Transverse colon (tissue), 4 donors: ENCODE measurements at regions of chr12 and their contacts with region 1.

Region 1: DNA sequence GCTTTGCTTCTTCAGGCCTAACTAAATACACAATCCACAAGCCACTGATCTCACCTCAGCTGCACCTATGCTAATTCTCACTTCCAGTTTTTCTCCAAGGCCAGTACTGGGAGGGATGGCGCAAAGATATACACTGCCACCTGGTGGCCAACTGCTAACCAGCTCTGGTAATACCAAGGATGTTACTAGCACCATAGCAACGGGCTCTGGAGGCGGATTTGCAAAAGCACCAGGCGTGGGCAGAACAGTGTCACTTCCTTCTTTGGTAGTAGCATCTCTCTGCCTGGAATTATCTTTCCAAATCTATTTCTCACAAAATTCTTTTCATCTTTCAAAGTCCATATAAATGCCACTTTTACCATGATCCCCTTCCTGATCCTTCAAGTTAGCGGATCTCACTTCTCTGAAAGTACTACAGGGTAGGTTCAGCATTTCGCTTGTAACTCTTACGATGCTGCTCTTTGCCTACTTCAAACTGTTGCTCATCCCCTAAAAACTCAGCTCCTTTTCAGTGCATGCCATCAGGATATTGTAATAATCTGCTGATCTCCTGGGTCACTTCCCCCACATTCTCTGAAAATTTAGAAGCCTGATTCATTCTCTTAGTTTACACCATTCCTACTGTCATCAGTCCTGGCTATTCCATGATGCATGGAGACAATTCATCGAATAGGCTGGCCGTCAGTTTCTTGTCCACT is 37.1 kb upstream of the FOXJ2 start:
- DNase-seq: peak; percentile 77
- H3K4me3 ChIP-seq: no peak overlapping the region
- H3K27ac ChIP-seq: peak overlapping the region; percentile 21 to 60 (median 56)
- H3K4me1 ChIP-seq: peaks cover 0 to 3% (median 0%) of the 10 kb centered on the region in 4 donors
- H3K27me3 ChIP-seq: no peaks in the 10 kb centered on the region
- CTCF ChIP-seq: peak; percentile 82 to 88 (median 85)
- EP300 ChIP-seq: no peak
- POLR2A ChIP-seq: no peak

Region 2: GRCh38 chr12:6632026-6632983 is 1363.1 kb before region 1 on chr12:
- in situ Hi-C with region 1: no loop called
- intact Hi-C with region 1: no loop called
- DNase-seq: peak; percentile 53
- H3K4me3 ChIP-seq: peak overlapping the region in 1 of 4 donors; percentile 30
- H3K27ac ChIP-seq: peak overlapping the region; percentile 78 to 93 (median 86)
- H3K4me1 ChIP-seq: peaks cover 0 to 50% (median 41%) of the 10 kb centered on the region in 4 donors
- H3K27me3 ChIP-seq: no peaks in the 10 kb centered on the region
- CTCF ChIP-seq: no peak
- EP300 ChIP-seq: no peak
- POLR2A ChIP-seq: peak; percentile 11

Region 3: DNA sequence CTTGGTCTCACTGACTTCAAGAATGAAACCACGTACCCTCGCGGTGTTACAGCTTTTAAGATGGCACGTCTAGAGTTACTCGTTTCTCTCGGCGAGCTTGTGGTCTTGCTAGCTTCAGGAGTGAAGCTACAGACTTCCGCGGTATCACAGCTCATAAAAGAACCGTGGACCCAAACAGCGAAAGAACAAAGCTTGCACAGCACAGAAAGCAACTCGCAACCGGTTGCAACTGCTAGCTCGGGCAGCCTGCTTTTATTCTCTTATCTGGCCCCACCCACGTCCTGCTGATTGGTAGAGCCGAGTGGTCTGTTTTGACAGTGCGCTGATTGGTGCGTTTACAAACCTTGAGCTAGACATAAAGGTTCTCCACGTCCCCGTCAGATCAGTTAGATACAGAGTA is 244.0 kb before region 1 on chr12:
- in situ Hi-C with region 1: no loop called
- intact Hi-C with region 1: no loop called
- DNase-seq: no peak
- H3K4me3 ChIP-seq: no peak overlapping the region
- H3K27ac ChIP-seq: no peak overlapping the region
- H3K4me1 ChIP-seq: no peaks in the 10 kb centered on the region
- H3K27me3 ChIP-seq: no peaks in the 10 kb centered on the region
- CTCF ChIP-seq: no peak
- EP300 ChIP-seq: no peak
- POLR2A ChIP-seq: no peak

Region 4: DNA sequence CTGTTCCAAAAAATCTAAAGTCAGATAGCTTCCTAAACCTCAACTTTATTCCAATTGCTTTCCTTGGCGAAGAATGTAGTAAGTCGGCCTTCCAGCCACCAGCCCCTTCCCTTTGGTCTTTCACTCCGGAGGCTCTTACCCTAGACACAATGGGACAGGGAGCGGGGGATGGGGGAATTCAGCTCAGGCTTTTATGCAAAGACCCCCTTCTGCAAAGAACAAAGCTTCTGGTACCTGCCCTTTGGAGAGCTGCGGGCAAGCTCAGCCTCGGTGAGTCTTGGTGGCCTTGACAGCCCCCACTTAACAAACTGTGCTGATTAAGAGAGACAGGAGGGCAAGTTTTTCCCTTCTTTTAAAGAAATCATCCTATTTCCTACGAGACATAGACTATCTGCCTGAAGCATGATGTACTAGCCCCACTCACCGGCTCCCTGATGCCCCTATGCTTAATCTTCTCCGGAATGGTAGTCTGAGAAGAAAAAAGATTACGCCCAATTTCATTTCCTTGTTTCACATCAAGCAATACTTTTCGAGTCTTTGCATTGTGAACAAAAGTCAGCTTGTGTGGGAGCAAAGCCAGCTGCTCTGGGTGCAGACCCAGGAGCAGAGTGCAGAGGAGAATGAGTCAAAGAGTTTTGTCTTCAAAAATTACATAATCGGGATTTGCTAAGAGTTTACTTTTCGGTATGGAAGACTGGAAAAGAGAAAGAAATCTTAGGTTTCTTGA is 207.7 kb before region 1 on chr12:
- in situ Hi-C with region 1: no loop called
- intact Hi-C with region 1: no loop called
- DNase-seq: no peak
- H3K4me3 ChIP-seq: no peak overlapping the region
- H3K27ac ChIP-seq: no peak overlapping the region
- H3K4me1 ChIP-seq: no peaks in the 10 kb centered on the region
- H3K27me3 ChIP-seq: no peaks in the 10 kb centered on the region
- CTCF ChIP-seq: no peak
- EP300 ChIP-seq: no peak
- POLR2A ChIP-seq: no peak

Region 5: DNA sequence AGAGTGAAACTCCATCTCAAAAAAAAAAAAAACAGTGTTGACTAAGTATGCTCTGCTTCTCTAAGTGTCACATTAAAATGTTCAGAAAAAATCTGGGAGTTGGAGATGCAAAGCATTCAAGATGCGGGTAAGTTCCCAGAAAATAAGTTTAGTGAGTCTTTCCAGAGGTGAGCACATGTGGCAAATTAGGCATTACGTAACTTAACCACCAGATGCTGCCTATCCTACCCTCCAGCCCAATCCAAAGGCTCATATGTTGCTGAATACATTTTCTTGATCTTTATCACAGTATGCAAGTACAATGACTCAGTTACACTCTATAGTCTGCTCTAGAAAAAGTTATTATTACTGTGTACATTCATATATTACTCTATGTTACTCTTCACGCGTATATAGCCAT is 126.3 kb before region 1 on chr12:
- in situ Hi-C with region 1: loop called in 2 of 4 experiments (anchors 10 to 25 kb)
- intact Hi-C with region 1: loop called (anchors 5 kb)
- DNase-seq: no peak
- H3K4me3 ChIP-seq: no peak overlapping the region
- H3K27ac ChIP-seq: no peak overlapping the region
- H3K4me1 ChIP-seq: no peaks in the 10 kb centered on the region
- H3K27me3 ChIP-seq: peaks cover 24% of the 10 kb centered on the region
- CTCF ChIP-seq: no peak
- EP300 ChIP-seq: no peak
- POLR2A ChIP-seq: no peak

Region 6: GRCh38 chr12:7933255-7933729 is 62.1 kb before region 1 on chr12:
- in situ Hi-C with region 1: loop called in 2 of 4 experiments (anchors 10 kb)
- intact Hi-C with region 1: no loop called
- DNase-seq: peak; percentile 67
- H3K4me3 ChIP-seq: peak overlapping the region in 2 of 4 donors; percentile 31 to 52
- H3K27ac ChIP-seq: peak overlapping the region; percentile 80 to 88 (median 84)
- H3K4me1 ChIP-seq: peaks cover 0 to 29% (median 9%) of the 10 kb centered on the region in 4 donors
- H3K27me3 ChIP-seq: no peaks in the 10 kb centered on the region
- CTCF ChIP-seq: peak; percentile 38 to 58 (median 52)
- EP300 ChIP-seq: no peak
- POLR2A ChIP-seq: peak; percentile 52

Region 7: GRCh38 chr12:8065991-8066594 is 70.7 kb after region 1 on chr12 and contains the start of gene C3AR1:
- in situ Hi-C with region 1: no loop called
- intact Hi-C with region 1: no loop called
- DNase-seq: peak; percentile 44
- H3K4me3 ChIP-seq: peak within 1 kb of the TSS in 1 of 4 donors; percentile 25
- H3K27ac ChIP-seq: peak within 1 kb of the TSS; percentile 31 to 73 (median 58)
- H3K4me1 ChIP-seq: no peaks in the 10 kb centered on the region
- H3K27me3 ChIP-seq: no peaks in the 10 kb centered on the region
- CTCF ChIP-seq: no peak
- EP300 ChIP-seq: no peak
- POLR2A ChIP-seq: peak; percentile 71
- total RNA-seq, gene C3AR1: 2.4 to 9.4 (median 3.6) TPM